Activated B cell treated with CpG ODN at 0.5 μM for 24 hours (primary cell): ENCODE measurements at regions of chr18 and their contacts with region 1.

Region 1: DNA sequence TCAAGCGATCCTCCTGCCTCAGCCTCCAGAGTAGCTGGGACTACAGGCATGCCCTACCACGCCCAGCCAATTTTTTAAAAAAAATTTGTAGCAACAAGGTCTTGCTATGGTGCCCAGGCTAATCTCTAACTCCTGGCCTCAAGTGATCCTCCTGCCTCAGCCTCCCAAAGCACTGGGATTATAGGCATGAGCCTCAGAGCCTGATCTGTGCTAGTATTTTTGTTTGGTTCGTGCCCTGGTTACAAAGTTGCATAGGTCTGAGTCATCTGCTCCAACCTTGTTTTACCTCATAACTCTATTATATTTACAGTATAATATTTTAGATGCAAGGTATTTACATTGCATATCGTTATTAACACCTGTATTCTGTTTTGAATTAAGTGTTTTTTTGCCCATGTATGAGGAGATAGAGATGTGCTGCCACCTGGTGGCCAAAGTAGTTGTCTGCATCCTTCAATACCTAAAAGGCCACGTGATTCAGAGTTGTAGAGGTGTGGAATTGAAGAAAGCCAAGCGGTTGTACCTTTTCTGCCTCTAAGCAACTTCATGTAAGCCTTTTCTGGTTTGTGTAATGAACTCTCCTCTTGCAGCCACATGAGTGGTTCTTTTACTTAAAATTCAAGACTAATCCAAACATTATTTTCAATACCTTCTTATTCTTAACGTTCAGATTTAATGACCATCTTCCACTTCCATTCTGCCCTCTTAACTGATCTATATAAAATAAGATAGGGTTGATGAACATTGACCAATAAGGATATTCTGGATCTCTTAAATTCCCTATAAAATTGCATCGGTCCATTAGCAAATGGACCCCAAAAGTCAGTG is 19.9 kb upstream of the CABYR start:
- DNase-seq: peak; percentile 40
- ATAC-seq: peak; percentile 77
- H3K4me3 Mint-ChIP-seq: no peak overlapping the region
- H3K27ac Mint-ChIP-seq: no peak overlapping the region
- H3K4me1 Mint-ChIP-seq: peaks cover 9% of the 10 kb centered on the region
- H3K27me3 Mint-ChIP-seq: no peaks in the 10 kb centered on the region
- CTCF ChIP-seq: no peak

Region 2: DNA sequence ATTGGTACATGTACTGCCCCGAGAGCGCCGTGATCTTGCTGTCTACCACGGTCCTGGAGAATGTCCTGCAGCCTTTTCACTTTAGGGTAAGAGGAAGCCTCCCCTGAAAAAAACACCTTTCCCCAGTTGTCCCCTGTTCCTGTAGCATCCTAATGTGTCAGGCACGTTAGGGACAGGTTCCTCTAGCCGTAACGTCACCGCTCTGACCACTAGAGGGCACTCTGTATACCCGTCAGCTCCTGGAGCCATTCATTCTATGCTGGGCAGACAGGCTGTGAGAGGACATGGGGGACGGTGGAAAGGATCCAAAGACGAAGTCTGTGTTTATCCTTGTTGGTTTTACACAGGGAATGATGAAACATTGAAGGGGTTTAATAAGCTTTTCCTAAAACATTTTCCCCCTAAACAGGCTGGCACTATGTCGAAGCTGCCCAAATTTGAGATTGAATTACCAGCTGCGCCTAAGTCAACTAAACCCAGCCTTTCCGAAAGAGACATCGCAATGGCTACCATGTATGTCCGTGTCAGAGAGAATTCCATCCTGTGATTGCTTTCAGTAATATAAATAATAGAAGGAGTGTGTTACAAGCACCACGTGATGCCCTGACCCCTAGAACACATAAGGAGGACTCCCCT is 602.9 kb before region 1 on chr18:
- CTCF ChIA-PET with region 1: no interaction called
- POLR2A ChIA-PET with region 1: no interaction called
- intact Hi-C with region 1: loop called (anchors 2 kb)
- DNase-seq: peak; percentile 42
- ATAC-seq: peak; percentile 97
- H3K4me3 Mint-ChIP-seq: no peak overlapping the region
- H3K27ac Mint-ChIP-seq: peak overlapping the region; percentile 74
- H3K4me1 Mint-ChIP-seq: peaks cover 35% of the 10 kb centered on the region
- H3K27me3 Mint-ChIP-seq: no peaks in the 10 kb centered on the region
- CTCF ChIP-seq: peak; percentile 78

Region 3: GRCh38 chr18:23619388-23619881 is 499.5 kb before region 1 on chr18:
- CTCF ChIA-PET with region 1: interaction called, 9 read pairs
- POLR2A ChIA-PET with region 1: no interaction called
- intact Hi-C with region 1: loop called (anchors 1 kb)
- DNase-seq: peak; percentile 18
- ATAC-seq: peak; percentile 36
- H3K4me3 Mint-ChIP-seq: peak overlapping the region; percentile 63
- H3K27ac Mint-ChIP-seq: no peak overlapping the region
- H3K4me1 Mint-ChIP-seq: peaks cover 17% of the 10 kb centered on the region
- H3K27me3 Mint-ChIP-seq: peaks cover 34% of the 10 kb centered on the region
- CTCF ChIP-seq: no peak

Region 4: GRCh38 chr18:23812546-23813440 is 306.2 kb before region 1 on chr18:
- CTCF ChIA-PET with region 1: no interaction called
- POLR2A ChIA-PET with region 1: no interaction called
- intact Hi-C with region 1: loop called (anchors 1 kb)
- DNase-seq: no peak
- ATAC-seq: no peak
- H3K4me3 Mint-ChIP-seq: no peak overlapping the region
- H3K27ac Mint-ChIP-seq: no peak overlapping the region
- H3K4me1 Mint-ChIP-seq: peaks cover 11% of the 10 kb centered on the region
- H3K27me3 Mint-ChIP-seq: no peaks in the 10 kb centered on the region
- CTCF ChIP-seq: no peak

Region 5: DNA sequence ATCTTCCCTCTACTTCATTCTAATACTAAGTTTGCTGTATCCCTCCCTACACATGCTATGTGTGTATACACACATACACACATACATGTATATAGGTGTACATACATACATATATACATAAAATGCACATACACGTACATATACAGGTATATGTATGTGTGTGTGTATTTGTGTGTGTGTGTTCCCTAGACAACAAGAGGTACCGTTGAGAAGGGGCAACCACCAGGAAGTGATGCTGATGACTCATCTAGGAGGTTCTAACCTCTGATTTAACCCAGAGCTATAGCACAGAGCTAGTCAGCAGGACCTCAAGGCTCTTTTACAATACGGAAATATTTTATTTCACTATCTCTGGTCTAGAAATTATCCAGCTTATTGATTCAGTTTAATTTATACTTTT is 290.5 kb before region 1 on chr18:
- CTCF ChIA-PET with region 1: no interaction called
- POLR2A ChIA-PET with region 1: no interaction called
- intact Hi-C with region 1: loop called (anchors 5 kb)
- DNase-seq: no peak
- ATAC-seq: peak; percentile 95
- H3K4me3 Mint-ChIP-seq: no peak overlapping the region
- H3K27ac Mint-ChIP-seq: no peak overlapping the region
- H3K4me1 Mint-ChIP-seq: no peaks in the 10 kb centered on the region
- H3K27me3 Mint-ChIP-seq: peaks cover under 1% of the 10 kb centered on the region
- CTCF ChIP-seq: no peak

Region 6: GRCh38 chr18:23967321-23968089 is 151.5 kb before region 1 on chr18:
- CTCF ChIA-PET with region 1: no interaction called
- POLR2A ChIA-PET with region 1: no interaction called
- intact Hi-C with region 1: loop called (anchors 1 kb)
- DNase-seq: peak; percentile 28
- ATAC-seq: peak; percentile 55
- H3K4me3 Mint-ChIP-seq: peak overlapping the region; percentile 62
- H3K27ac Mint-ChIP-seq: peak overlapping the region; percentile 79
- H3K4me1 Mint-ChIP-seq: peaks cover 83% of the 10 kb centered on the region
- H3K27me3 Mint-ChIP-seq: no peaks in the 10 kb centered on the region
- CTCF ChIP-seq: no peak